OCI-LY7 (cell line): ENCODE measurements at regions of chr9 and their contacts with region 1.

Region 1: DNA sequence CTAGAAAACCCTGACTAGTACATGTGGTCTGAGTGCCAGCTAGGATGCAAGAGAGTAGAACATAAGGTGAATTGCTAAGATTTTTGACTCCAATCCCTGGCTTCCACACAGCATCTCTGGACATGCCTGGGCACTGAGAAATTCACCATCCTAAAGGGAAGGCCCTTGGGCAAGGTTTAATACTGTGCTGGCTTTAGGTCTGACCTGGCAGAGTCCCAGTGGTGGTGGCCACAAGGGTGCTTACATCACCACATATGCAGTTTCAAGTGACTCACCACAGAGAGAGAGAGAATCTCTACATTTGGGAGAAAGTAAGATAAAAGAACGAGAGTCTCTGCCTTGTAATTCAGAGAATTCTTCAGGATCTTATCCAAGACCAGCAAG is 661.6 kb upstream of the C9orf72 start:
- DNase-seq: no peak
- H3K4me3 ChIP-seq: no peak overlapping the region
- H3K27ac ChIP-seq: no peak overlapping the region
- H3K4me1 ChIP-seq: no peaks in the 10 kb centered on the region
- CTCF ChIP-seq: no peak

Region 2: GRCh38 chr9:28166179-28166578 is 68.7 kb before region 1 on chr9:
- CTCF ChIA-PET with region 1: no interaction called
- POLR2A ChIA-PET with region 1: interaction called, 10 read pairs
- intact Hi-C with region 1: no loop called
- DNase-seq: no peak
- H3K4me3 ChIP-seq: no peak overlapping the region
- H3K27ac ChIP-seq: no peak overlapping the region
- H3K4me1 ChIP-seq: no peaks in the 10 kb centered on the region
- CTCF ChIP-seq: no peak